ENCODE measurements at regions of chr18 and their contacts with region 1.

Region 1: DNA sequence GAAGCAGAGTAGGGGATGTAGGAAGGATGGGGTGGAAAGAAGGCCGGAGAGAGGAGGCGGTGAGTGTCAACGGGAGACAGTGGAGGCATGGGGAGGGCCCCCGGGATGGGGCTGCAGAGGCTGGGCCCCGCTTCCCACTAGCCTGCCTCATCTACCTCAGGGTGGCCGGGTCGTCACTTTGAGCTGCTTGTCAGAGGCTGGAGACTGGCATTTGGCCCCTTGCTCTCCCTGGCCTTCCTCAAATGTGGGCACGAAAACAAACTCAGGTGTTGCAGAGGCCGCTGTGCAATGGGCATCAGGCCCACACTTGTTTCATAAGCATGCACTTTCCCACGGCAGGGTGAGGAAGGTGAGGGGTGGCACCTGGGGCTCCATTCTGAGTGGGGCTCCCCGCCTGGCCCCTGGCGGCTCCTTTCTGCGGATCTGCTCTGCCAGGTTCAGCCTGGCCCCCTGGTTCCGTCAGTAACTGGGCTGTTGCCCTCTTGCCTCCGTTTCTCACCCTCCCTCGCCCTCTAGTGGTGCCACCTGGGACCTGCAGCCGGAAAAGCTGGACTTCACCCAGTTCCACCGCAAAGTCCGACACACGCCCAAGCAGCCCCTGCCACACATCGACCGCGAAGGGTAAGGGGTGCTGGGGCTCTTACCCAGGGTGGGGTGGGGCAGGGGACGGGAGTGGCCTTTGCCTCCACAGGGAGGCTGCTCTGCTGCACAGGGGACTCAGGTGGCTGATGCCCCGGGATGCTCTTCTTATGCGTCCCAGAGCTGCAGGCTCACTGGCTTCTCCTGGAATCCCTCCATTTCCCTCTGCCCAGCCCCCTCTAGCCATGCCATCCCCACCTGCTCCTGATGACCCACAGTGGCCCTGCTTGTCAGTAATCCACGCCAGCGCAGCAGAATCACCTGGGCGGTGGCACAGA is 125.4 kb downstream of the CTIF start:
- DNase-seq: peak; percentile 69
- H3K4me3 Mint-ChIP-seq: no peak overlapping the region
- H3K27ac Mint-ChIP-seq: no peak overlapping the region
- H3K4me1 Mint-ChIP-seq: no peaks in the 10 kb centered on the region
- H3K27me3 Mint-ChIP-seq: no peaks in the 10 kb centered on the region

Region 2: DNA sequence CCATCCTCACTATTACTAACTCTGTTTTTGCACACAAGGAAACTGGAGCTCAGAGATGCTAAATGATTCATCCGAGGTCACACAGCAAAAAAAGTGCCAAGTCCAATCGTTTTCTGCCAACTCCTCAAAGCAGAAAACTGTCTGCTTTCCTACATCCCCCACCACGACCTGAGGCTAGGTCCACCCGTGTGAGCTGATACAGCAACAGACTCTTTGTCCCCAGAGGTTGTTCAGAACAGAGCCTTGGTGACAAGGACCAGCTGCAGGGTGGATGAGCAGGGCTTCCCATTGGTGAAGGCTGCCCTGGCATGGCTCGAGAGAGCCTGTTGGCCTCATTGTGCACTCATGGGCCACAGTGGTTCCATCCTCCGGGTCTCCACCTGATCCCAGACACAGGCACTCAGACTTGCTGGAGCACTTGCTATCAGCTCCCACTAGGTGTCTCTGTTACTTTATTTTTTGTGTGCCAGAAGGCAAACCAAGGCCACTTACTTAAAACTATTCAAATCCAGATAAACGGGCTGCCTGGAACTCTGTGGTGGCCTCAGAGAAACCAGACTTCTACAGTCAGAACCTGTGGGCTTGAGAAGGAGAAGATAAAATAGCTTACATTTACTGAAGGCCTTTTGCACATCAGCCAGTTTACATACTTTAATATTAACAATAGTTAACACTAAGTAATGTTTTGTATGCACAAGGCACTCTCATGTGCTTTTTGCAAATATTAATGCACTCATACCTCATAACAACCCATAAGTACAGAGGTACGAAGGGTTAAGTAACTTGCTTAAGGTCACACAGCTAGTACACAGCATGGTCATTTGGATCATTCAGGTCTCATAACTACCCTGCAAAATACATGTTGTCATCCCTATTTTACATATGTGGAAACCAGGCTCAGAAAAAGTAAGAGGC is 188.3 kb before region 1 on chr18:
- CTCF ChIA-PET with region 1: interaction called, 48 read pairs
- POLR2A ChIA-PET with region 1: no interaction called
- intact Hi-C with region 1: loop called (anchors 1 kb)
- DNase-seq: peak; percentile 37
- H3K4me3 Mint-ChIP-seq: no peak overlapping the region
- H3K27ac Mint-ChIP-seq: no peak overlapping the region
- H3K4me1 Mint-ChIP-seq: no peaks in the 10 kb centered on the region
- H3K27me3 Mint-ChIP-seq: peaks cover 20% of the 10 kb centered on the region

Measured in activated CD4-positive, alpha-beta memory T cell treated with anti-CD3 and anti-CD28 coated beads for 36 hours (primary cell).